CD4-positive, alpha-beta T cell (primary cell): ENCODE measurements at regions of chr2 and their contacts with region 1.

Region 1: DNA sequence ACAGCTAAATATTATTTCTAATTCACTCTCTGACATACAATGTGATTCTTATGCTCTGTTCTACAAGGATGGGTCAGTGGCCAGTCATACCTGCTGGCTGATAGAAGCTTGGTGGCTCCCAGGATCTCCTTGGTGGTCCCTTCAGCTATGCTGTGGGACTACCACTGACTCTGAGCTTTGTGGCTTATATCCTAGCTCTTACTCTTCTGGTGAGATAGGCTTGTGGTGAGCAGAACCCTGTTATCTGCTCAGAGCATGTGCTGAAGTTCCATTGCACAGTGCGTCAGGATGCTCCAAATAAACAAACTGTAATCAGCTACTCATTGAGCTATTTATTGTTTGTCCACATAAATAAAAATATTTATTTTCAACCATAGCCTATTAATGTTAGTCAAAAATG is 51.7 kb downstream of the MFSD6 start:
- DNase-seq: no peak
- ATAC-seq: no peak
- H3K4me3 ChIP-seq: no peak overlapping the region
- H3K4me3 Mint-ChIP-seq: no peak overlapping the region
- H3K27ac ChIP-seq: no peak overlapping the region
- H3K27ac Mint-ChIP-seq: no peak overlapping the region
- H3K4me1 ChIP-seq: peaks cover 19% of the 10 kb centered on the region
- H3K4me1 Mint-ChIP-seq: peaks cover 82% of the 10 kb centered on the region
- H3K27me3 ChIP-seq: no peaks in the 10 kb centered on the region
- H3K27me3 Mint-ChIP-seq: no peaks in the 10 kb centered on the region
- CTCF ChIP-seq: no peak

Region 2: DNA sequence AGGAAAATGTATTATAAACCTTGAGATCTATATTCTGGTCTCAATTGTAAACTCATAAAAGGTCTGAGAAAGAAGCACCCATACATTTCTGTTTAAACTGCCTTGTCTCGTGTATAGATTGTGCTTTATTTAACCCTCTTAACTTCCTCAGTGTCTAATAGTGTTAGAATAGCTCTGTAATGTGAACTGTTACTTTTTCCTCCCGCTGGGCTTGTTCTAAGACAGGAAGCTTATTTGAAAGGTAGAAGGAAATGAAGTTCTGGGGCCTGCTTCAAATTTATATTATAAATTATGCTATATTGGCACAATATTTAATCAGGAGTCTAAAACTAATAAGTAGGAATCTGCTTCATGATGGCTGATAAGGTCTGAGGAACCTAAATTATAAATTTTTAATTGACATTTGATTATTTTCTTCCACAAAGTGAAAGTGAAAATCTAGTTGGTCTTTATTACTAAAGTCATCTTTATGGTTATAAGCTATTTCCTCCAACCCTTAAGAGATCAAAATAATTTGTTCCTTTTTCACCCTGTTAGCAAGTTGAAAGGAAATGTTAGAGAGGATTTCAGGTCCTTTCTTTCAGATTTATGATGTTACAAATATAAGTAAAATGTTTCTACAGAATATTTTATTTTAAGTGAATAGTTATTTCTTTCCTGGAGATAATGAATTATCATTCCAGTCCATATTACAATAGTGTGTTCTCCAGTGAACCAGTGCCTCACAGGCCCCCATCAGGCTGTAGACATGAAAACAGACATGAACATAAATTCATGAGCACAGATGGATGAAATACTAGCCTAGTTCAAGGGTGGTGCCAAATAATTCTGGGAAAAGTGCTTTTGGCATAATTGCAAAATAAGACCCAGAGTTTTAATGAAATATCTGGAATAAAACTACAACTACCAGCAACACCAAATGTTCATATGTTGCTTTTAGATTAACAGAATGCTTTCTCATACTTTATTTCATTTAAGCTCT is 43.8 kb before region 1 on chr2:
- CTCF ChIA-PET with region 1: no interaction called
- POLR2A ChIA-PET with region 1: no interaction called
- intact Hi-C with region 1: loop called in 1 of 2 experiments (anchors 5 kb)
- DNase-seq: peak in 2 of 14 experiments; percentile 28 to 48
- ATAC-seq: peak; percentile 71
- H3K4me3 ChIP-seq: no peak overlapping the region
- H3K4me3 Mint-ChIP-seq: peak overlapping the region; percentile 30
- H3K27ac ChIP-seq: peak overlapping the region; percentile 34 to 75
- H3K27ac Mint-ChIP-seq: peak overlapping the region; percentile 78
- H3K4me1 ChIP-seq: peaks cover 30% of the 10 kb centered on the region
- H3K4me1 Mint-ChIP-seq: peaks cover 96% of the 10 kb centered on the region
- H3K27me3 ChIP-seq: no peaks in the 10 kb centered on the region
- H3K27me3 Mint-ChIP-seq: no peaks in the 10 kb centered on the region
- CTCF ChIP-seq: no peak